HAP-1 (cell line): ENCODE measurements at regions of chrX and their contacts with region 1.

Region 1: DNA sequence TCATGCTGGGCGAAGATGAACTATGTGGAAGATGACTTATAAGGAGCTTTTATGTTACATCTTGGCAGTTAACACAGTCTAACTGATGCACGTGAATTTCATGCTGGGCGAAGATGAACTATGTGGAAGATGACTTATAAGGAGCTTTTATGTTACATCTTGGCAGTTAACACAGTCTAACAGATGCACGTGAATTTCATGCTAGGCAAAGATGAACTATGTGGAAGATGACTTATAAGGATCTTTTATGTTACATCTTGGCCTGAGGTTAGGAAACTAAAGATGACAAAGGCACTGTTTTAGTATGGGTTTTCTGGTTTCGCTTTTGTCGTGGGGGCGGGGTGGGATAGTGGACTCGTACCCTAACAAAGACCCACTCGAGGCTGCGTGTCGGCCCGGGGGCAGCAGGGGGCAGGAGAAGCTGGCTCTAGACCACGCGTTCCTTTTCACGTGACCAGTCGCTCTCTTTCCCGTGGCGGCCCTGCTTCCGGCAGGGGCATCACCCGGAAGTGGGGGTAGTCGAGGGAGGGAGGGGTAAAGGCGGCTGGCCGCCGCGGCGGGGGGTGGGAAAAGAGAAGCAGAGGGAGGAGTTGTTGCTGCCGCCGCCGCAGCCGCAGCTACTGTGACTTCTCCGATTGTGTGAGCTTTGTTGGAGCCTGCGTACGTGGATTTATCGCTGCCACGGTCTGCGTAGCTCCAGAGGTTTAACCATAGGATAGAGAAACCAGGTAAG is at the start of gene ATP7A:
- DNase-seq: peak; percentile 94 to 98
- H3K4me3 ChIP-seq: peak within 1 kb of the TSS; percentile 49
- H3K4me1 ChIP-seq: peaks cover 11% of the 10 kb centered on the region
- H3K27me3 ChIP-seq: no peaks in the 10 kb centered on the region

Region 2: GRCh38 chrX:77293331-77293995 is 616.8 kb before region 1 on chrX:
- in situ Hi-C with region 1: no loop called
- DNase-seq: no peak
- H3K4me3 ChIP-seq: no peak overlapping the region
- H3K4me1 ChIP-seq: no peaks in the 10 kb centered on the region
- H3K27me3 ChIP-seq: no peaks in the 10 kb centered on the region

Region 3: DNA sequence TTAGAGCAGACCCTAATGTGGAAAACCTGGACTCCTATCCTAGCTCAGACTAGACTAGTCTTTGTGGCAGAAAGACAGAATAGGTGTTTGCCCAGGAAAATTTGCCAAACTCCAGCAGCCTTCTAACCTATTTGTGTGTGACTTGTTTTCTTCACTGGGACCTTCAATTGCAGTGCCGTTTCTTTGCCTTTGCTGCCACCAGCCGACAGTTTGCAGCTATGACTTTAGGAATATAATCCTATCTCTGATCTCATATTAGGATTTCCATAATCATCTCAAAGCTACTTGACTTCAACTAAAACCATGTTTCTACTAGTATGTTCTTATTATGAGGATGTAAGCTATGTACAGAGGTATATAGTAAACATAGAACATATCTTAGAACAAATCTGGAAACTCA is 119.4 kb after region 1 on chrX:
- in situ Hi-C with region 1: loop called (anchors 10 kb)
- DNase-seq: peak; percentile 17 to 48
- H3K4me3 ChIP-seq: no peak overlapping the region
- H3K4me1 ChIP-seq: peaks cover under 1% of the 10 kb centered on the region; the same call in 1 of the 2 replicates
- H3K27me3 ChIP-seq: no peaks in the 10 kb centered on the region

Region 4: DNA sequence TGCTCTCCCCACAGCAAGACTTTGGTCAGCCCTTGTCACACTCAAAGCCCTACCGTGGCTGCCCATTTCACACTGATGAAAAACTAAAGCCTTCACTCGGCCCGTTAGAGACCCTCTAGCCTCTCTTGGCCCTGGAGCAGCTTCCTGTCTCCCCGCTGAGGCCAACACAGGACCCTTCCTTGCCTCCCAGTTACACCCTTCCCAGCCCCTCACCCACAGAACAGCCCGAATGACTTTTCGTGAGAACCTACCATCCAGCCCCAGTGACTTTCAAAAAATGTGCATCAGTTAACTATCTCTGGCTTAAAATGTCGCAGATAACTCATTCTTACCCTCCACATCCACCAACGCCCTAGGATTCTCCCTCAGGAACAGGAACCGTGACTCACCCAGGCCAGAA is 229.9 kb after region 1 on chrX:
- in situ Hi-C with region 1: no loop called
- DNase-seq: no peak
- H3K4me3 ChIP-seq: no peak overlapping the region
- H3K4me1 ChIP-seq: no peaks in the 10 kb centered on the region
- H3K27me3 ChIP-seq: no peaks in the 10 kb centered on the region

Region 5: GRCh38 chrX:78595901-78596502 is 685.7 kb after region 1 on chrX:
- in situ Hi-C with region 1: no loop called
- DNase-seq: peak in 1 of 2 experiments; percentile 21
- H3K4me3 ChIP-seq: no peak overlapping the region
- H3K4me1 ChIP-seq: no peaks in the 10 kb centered on the region
- H3K27me3 ChIP-seq: no peaks in the 10 kb centered on the region